ENCODE measurements at regions of chr1 and their contacts with region 1.

Region 1: DNA sequence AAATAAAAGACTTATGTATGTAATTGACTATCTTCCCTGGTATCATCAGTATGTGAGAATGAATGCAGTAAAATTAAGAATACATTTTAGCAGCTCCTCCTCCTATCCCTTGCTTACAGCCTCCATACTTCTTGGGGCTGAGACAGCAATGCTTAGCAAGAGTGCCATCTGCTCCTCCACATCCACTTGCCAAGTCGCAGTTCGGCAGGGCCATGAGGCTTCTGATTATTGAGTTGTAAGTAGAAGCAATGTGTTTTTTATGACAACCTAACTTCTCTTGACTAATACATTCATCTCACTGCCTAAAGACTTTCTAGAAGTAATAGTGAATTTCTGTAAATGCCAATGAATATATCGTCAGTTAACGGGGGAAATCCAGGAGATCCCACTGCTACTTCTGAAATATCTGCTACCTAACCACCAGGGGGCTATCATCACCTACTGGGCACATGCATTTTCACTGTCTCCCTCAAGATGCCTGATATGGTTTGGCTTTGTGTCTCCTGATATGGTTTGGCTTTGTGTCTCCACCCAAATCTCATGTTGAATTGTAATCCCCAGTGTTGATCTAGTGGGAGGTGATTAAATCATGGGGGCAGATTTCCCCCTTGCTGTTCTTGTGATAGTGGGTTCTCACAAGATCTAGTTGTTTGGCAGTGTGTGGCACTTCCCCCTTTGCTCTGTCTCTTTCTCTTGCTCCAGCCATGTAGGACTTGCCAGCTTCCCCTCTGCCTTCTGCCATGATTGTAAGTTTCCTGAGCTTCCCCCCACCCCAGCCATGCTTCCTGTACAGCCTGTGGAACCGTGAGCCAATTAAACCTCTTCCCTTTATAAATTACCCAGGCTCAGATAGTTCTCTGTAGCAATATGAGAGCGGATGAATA is 59.6 kb downstream of the EXTL2 start:
- DNase-seq: peak; percentile 26
- H3K4me3 ChIP-seq: no peak overlapping the region
- H3K27ac ChIP-seq: peak overlapping the region; percentile 95
- H3K4me1 ChIP-seq: peaks cover 22% of the 10 kb centered on the region
- H3K27me3 ChIP-seq: no peaks in the 10 kb centered on the region
- CTCF ChIP-seq: peak in 1 of 2 donors; percentile 13
- POLR2A ChIP-seq: no peak

Region 2: GRCh38 chr1:100627054-100627716 is 207.8 kb before region 1 on chr1:
- CTCF ChIA-PET with region 1: interaction called, 3 read pairs
- POLR2A ChIA-PET with region 1: no interaction called
- dilution Hi-C with region 1: no loop called
- intact Hi-C with region 1: loop called (anchors 1 kb)
- DNase-seq: peak; percentile 76
- H3K4me3 ChIP-seq: no peak overlapping the region
- H3K27ac ChIP-seq: peak overlapping the region; percentile 49
- H3K4me1 ChIP-seq: peaks cover 36% of the 10 kb centered on the region
- H3K27me3 ChIP-seq: no peaks in the 10 kb centered on the region
- CTCF ChIP-seq: no peak
- POLR2A ChIP-seq: no peak

Region 3: GRCh38 chr1:100708476-100709062 is 126.5 kb before region 1 on chr1:
- CTCF ChIA-PET with region 1: no interaction called
- POLR2A ChIA-PET with region 1: interaction called, 3 read pairs
- dilution Hi-C with region 1: no loop called
- intact Hi-C with region 1: loop called (anchors 5 kb)
- DNase-seq: peak; percentile 85
- H3K4me3 ChIP-seq: no peak overlapping the region
- H3K27ac ChIP-seq: peak overlapping the region; percentile 61
- H3K4me1 ChIP-seq: peaks cover 25% of the 10 kb centered on the region
- H3K27me3 ChIP-seq: no peaks in the 10 kb centered on the region
- CTCF ChIP-seq: no peak
- POLR2A ChIP-seq: no peak

Region 4: GRCh38 chr1:100810360-100810759 is 24.7 kb before region 1 on chr1:
- CTCF ChIA-PET with region 1: no interaction called
- POLR2A ChIA-PET with region 1: no interaction called
- dilution Hi-C with region 1: no loop called
- intact Hi-C with region 1: no loop called
- DNase-seq: no peak
- H3K4me3 ChIP-seq: no peak overlapping the region
- H3K27ac ChIP-seq: no peak overlapping the region
- H3K4me1 ChIP-seq: no peaks in the 10 kb centered on the region
- H3K27me3 ChIP-seq: no peaks in the 10 kb centered on the region
- CTCF ChIP-seq: no peak
- POLR2A ChIP-seq: no peak

Region 5: GRCh38 chr1:101697072-101697471 is 862.1 kb after region 1 on chr1:
- CTCF ChIA-PET with region 1: no interaction called
- POLR2A ChIA-PET with region 1: no interaction called
- dilution Hi-C with region 1: no loop called
- intact Hi-C with region 1: no loop called
- DNase-seq: peak; percentile 5
- H3K4me3 ChIP-seq: no peak overlapping the region
- H3K27ac ChIP-seq: no peak overlapping the region
- H3K4me1 ChIP-seq: no peaks in the 10 kb centered on the region
- H3K27me3 ChIP-seq: no peaks in the 10 kb centered on the region
- CTCF ChIP-seq: no peak
- POLR2A ChIP-seq: no peak